OCI-LY7 (cell line): ENCODE measurements at regions of chr12 and their contacts with region 1.

Region 1: DNA sequence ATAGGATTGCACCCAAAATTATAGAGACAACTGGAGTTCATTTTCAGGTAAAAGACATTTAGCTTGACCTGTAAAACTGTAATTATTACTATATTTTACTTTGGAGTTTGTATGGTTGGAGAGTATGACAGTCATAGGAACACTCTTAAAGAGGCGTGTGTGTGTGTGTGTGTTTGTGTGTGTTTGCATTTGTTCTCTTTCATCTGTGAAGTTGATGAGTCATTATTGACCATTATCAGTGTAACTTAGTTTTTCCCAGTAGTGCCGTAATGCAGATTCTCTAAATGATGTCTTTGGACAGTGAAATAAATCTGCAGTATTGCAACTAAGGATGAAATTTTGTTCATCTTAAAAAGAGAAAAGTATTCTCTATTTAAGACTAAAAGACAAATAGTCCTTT is 13.0 kb downstream of the WASHC4 start:
- DNase-seq: no peak
- H3K4me3 ChIP-seq: no peak overlapping the region
- H3K27ac ChIP-seq: no peak overlapping the region
- H3K4me1 ChIP-seq: no peaks in the 10 kb centered on the region
- CTCF ChIP-seq: no peak

Region 2: GRCh38 chr12:105025890-105026289 is 94.7 kb before region 1 on chr12:
- CTCF ChIA-PET with region 1: no interaction called
- POLR2A ChIA-PET with region 1: no interaction called
- intact Hi-C with region 1: no loop called
- DNase-seq: no peak
- H3K4me3 ChIP-seq: no peak overlapping the region
- H3K27ac ChIP-seq: no peak overlapping the region
- H3K4me1 ChIP-seq: peaks cover 8% of the 10 kb centered on the region
- CTCF ChIP-seq: no peak

Region 3: GRCh38 chr12:105085501-105085900 is 35.0 kb before region 1 on chr12:
- CTCF ChIA-PET with region 1: no interaction called
- POLR2A ChIA-PET with region 1: no interaction called
- intact Hi-C with region 1: no loop called
- DNase-seq: no peak
- H3K4me3 ChIP-seq: no peak overlapping the region
- H3K27ac ChIP-seq: no peak overlapping the region
- H3K4me1 ChIP-seq: peaks cover 4% of the 10 kb centered on the region
- CTCF ChIP-seq: 0 out of 2 replicates have a peak, but pooled peaks have one; percentile 15

Region 4: GRCh38 chr12:105141320-105141918 is 20.9 kb after region 1 on chr12:
- CTCF ChIA-PET with region 1: no interaction called
- POLR2A ChIA-PET with region 1: interaction called, 13 read pairs
- intact Hi-C with region 1: no loop called
- DNase-seq: no peak
- H3K4me3 ChIP-seq: no peak overlapping the region
- H3K27ac ChIP-seq: no peak overlapping the region
- H3K4me1 ChIP-seq: no peaks in the 10 kb centered on the region
- CTCF ChIP-seq: no peak

Region 5: GRCh38 chr12:105158876-105159275 is 38.3 kb after region 1 on chr12:
- CTCF ChIA-PET with region 1: no interaction called
- POLR2A ChIA-PET with region 1: interaction called, 4 read pairs
- intact Hi-C with region 1: loop called (anchors 5 kb)
- DNase-seq: no peak
- H3K4me3 ChIP-seq: no peak overlapping the region
- H3K27ac ChIP-seq: no peak overlapping the region
- H3K4me1 ChIP-seq: no peaks in the 10 kb centered on the region
- CTCF ChIP-seq: no peak

Region 6: DNA sequence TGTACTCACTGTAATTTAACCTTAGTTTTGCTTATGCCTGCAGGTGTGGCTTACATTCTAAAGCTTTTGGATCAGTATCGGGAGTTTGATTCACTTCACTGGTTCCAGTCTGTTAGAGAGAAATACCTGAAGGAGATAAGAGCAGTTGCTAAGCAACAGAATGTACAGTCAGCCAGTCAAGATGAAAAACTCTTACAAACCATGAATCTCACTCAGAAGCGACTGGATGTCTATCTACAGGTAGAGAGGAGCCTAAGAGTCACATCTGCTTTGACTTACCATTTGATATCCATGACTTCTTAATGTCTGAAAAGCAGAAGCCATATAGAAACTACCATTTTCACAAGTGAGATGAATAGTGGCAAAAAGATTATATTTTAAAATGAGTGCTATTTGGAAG is 43.5 kb after region 1 on chr12:
- CTCF ChIA-PET with region 1: no interaction called
- POLR2A ChIA-PET with region 1: interaction called, 3 read pairs
- intact Hi-C with region 1: loop called (anchors 5 kb)
- DNase-seq: no peak
- H3K4me3 ChIP-seq: no peak overlapping the region
- H3K27ac ChIP-seq: no peak overlapping the region
- H3K4me1 ChIP-seq: no peaks in the 10 kb centered on the region
- CTCF ChIP-seq: no peak